Dendritic cell treated with granulocyte-macrophage colony-stimulating factor and Interleukin-4, amounts not matched to agents 40 ng/mL and 50 ng/mL, for 4 days (primary cell): ENCODE measurements at regions of chr20 and their contacts with region 1.

Region 1: GRCh38 chr20:45095753-45096371 is 5.1 kb downstream of the KCNS1 start:
- H3K4me3 Mint-ChIP-seq: no peak overlapping the region
- H3K27ac Mint-ChIP-seq: no peak overlapping the region
- H3K4me1 Mint-ChIP-seq: peaks cover 11% of the 10 kb centered on the region
- H3K27me3 Mint-ChIP-seq: peaks cover 48% of the 10 kb centered on the region

Region 2: DNA sequence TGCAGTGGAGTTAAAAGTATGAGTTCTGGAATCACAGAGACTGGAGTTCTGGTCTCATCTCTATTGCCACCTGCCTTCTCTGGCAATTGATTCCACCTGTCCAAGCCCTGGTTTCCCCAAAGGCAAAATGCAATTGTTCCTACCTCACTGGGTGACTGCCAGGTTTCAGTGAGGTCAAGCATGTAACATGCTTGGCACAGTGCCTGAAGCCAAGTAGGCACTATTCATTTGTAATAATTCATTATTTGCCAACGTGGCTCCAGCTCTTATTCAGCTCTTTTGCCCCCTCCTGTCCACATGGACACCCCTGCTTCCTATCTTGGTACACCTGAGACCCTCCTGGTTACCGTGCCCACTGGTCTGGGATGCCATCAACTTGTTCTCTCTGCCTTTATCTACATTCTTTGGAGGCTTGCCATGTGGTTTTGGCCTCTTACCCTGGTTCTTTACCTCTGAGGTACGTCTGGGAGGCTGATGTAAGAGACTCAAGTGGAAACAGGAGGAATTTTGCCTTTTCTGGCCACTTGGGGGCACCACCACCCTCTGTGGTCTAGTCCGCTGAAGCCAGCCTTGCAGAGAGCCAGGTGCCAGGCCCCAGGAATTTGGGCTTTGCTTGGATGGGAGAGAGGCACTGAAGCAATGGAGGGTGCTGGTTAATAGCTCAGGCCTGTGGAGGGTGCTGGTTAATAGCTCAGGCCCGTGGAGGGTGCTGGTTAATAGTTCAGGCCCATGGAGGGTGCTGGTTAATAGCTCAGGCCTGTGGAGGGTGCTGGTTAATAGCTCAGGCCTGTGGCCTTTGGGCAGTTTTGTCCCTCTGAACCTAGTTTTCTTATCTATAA is 348.5 kb before region 1 on chr20:
- intact Hi-C with region 1: loop called (anchors 5 kb)
- H3K4me3 Mint-ChIP-seq: no peak overlapping the region
- H3K27ac Mint-ChIP-seq: no peak overlapping the region
- H3K4me1 Mint-ChIP-seq: no peaks in the 10 kb centered on the region
- H3K27me3 Mint-ChIP-seq: peaks cover 79% of the 10 kb centered on the region

Region 3: DNA sequence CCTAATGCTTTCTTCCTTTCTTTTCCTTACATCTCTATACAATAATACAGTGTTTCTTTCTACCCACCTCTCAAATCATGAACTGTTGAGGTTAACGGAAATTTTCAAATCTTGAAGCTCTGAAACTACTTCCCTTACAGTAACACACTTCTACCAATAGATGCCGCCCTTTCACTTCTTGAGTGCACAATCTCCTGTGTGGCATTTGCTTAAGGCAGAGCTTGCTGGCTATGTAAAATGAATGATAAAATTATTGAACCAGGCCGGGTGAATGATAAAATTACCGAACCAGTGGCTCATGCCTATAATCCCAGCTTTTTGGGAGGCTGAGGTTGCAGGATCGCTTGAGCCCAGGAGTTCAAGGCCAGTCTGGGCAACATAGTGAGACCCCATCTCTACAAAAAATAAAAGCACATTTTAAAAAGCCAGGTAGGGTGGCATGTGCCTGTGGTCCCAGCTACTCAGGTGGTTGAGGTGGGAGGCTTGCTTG is 51.7 kb before region 1 on chr20:
- intact Hi-C with region 1: loop called (anchors 5 kb)
- H3K4me3 Mint-ChIP-seq: no peak overlapping the region
- H3K27ac Mint-ChIP-seq: no peak overlapping the region
- H3K4me1 Mint-ChIP-seq: peaks cover 35% of the 10 kb centered on the region
- H3K27me3 Mint-ChIP-seq: no peaks in the 10 kb centered on the region

Region 4: GRCh38 chr20:45061244-45061643 is 34.6 kb before region 1 on chr20:
- intact Hi-C with region 1: no loop called
- H3K4me3 Mint-ChIP-seq: no peak overlapping the region
- H3K27ac Mint-ChIP-seq: no peak overlapping the region
- H3K4me1 Mint-ChIP-seq: peaks cover 24% of the 10 kb centered on the region
- H3K27me3 Mint-ChIP-seq: no peaks in the 10 kb centered on the region

Region 5: DNA sequence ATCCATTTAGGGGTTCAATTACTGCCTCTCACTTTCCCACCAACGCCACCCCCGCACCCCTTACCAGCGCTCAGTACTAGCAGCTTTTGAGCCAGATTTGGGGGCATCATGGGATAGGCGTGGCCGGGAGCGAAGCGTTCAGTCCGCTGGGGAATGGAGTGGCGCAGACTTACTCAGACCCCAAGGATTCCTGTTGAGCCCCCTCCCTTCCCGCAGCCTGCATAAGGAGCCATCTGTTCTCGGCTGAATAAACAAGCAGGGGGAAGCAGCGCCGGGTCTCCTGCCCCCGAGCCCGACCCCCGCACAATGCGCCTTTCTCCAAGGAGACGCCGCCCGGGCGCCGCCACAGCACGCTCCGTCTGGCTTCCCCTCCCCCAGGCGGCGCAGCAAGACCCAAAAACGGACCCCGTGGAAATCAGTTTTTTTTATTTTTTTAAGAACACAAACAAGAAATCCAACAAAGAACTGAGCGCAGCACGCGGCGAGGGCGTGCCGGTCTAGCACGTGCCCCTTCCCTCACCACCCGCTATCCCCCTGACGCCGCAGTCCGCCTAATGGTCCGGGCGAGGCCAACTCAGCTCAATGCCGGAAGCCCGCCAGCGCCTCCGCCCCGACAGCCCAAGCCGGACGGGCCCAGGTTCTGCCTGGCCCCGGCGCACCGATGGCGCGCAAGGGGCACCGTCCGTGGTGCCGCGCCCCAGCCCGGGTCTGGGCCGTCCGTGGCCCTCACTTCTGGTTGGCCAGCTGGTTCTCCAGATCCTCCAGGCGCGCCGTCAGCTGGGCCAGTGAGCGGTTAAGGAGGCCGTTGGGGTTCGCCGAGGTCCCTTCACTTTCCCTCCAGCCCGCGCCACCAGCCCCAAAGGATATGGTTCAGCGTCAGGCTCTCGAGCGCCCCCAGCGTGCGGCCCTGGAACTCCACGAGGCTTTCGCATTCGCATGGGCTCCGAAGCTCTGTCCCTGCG is 197.5 kb after region 1 on chr20:
- intact Hi-C with region 1: loop called (anchors 5 kb)
- H3K4me3 Mint-ChIP-seq: peak overlapping the region; percentile 70
- H3K27ac Mint-ChIP-seq: peak overlapping the region; percentile 51
- H3K4me1 Mint-ChIP-seq: peaks cover 25% of the 10 kb centered on the region
- H3K27me3 Mint-ChIP-seq: peaks cover 52% of the 10 kb centered on the region